GM10248 (cell line): ENCODE measurements at regions of chr13 and their contacts with region 1.

Region 1: DNA sequence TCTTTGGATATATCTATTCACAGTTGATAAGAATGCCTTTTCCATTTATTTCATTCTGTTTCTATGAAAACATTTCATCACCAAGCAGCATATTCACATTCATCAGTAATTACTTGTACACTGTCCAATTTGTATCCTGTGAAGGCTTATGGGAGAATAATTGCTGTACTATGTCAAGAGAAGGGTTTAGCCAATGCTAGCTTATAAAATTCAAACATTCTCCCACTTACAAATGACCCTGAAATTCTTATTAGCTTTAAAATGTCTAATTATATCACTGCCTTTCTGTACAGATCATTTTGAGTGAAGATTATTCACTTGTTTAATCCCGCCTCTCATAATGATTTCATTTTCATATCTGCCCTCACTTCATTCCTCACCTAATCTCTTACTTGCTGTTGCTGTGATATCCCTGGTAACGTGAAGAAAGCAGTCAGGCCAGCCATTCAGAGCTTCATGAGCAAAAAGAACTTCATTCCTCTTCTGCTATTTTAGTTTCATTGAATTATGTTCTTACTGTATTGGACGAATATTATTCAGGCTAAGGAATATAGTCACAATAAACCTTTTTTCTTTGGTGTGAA is 778.7 kb downstream of the OLFM4 start:
- DNase-seq: no peak
- CTCF ChIP-seq: no peak

Region 2: GRCh38 chr13:53782488-53782961 is 24.8 kb before region 1 on chr13:
- CTCF ChIA-PET with region 1: interaction called, 10 read pairs
- POLR2A ChIA-PET with region 1: no interaction called
- DNase-seq: peak; percentile 30
- CTCF ChIP-seq: peak; percentile 67